ENCODE measurements at regions of chr7 and their contacts with region 1.

Region 1: GRCh38 chr7:55641273-55641691 is 69.0 kb upstream of the VOPP1 start:
- DNase-seq: peak; percentile 62 to 90
- H3K4me3 ChIP-seq: no peak overlapping the region
- H3K27ac ChIP-seq: no peak overlapping the region
- H3K4me1 ChIP-seq: peaks cover 12% of the 10 kb centered on the region
- H3K27me3 ChIP-seq: no peaks in the 10 kb centered on the region
- CTCF ChIP-seq: peak; percentile 100

Region 2: DNA sequence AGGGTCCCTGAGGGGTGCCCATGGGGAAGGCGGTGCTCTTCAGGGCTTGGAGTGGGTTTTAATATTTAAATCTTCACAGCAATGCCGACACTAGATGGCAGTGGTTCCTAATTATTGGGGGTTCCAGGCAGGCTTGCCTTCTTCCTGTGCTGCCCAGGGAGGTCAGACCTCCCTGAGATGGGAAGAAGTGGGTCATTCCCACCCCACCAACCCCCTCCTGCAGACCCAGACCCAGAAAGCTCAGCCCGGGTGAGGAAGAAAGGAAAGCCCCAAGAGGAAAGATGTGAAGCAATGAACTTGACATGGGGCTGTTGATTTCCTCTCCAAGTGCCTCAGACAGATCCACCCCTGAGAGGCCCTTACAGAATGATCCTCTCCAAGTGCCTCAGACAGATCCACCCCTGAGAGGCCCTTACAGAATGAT is 361.2 kb before region 1 on chr7:
- CTCF ChIA-PET with region 1: no interaction called
- POLR2A ChIA-PET with region 1: no interaction called
- intact Hi-C with region 1: loop called (anchors 10 kb)
- DNase-seq: peak; percentile 72 to 74
- H3K4me3 ChIP-seq: no peak overlapping the region
- H3K27ac ChIP-seq: no peak overlapping the region
- H3K4me1 ChIP-seq: no peaks in the 10 kb centered on the region
- H3K27me3 ChIP-seq: peaks cover 54% of the 10 kb centered on the region
- CTCF ChIP-seq: peak; percentile 99

Region 3: DNA sequence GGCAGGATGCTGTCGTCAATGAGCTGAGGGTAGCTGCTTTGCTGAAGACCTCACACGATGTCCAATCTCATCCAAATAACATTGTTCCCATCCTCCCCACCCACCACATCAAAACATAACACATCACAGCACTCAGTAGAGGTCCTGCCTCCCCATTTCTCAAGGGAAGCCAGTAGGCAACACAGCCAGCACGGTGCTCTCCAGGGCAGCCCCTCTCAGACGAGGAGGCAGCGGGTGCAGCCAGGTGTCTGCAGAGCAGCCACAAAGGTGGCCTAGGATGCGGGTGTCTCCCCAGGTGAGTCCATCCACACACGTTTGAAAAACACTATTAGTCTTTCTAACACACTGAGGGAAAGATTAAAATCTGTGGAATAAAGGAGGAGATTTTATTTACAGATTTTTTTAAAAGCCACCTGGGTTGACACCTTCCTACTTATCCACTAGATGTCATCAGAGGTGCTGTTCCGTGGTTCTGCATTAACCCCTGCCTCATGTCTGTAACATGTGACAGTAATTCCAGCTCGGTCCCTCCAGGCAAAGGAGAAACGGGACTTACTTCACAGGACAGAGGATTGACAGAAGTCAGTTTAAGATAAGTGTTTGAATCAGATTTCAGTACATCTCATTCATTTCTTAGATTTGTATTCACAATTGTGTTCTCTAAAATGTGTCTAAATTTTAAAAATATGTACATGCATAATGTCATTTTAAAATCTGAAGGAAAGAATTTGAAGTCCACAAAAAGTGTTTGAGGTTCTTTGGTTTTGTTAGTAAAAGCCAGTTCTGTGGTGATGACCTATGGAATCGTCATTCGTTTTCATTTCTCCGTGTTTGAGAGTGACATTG is 208.1 kb before region 1 on chr7:
- CTCF ChIA-PET with region 1: interaction called, 3 read pairs
- POLR2A ChIA-PET with region 1: no interaction called
- intact Hi-C with region 1: loop called (anchors 10 kb)
- DNase-seq: peak; percentile 47 to 79
- H3K4me3 ChIP-seq: no peak overlapping the region
- H3K27ac ChIP-seq: no peak overlapping the region
- H3K4me1 ChIP-seq: no peaks in the 10 kb centered on the region
- H3K27me3 ChIP-seq: no peaks in the 10 kb centered on the region
- CTCF ChIP-seq: peak; percentile 93

Region 4: DNA sequence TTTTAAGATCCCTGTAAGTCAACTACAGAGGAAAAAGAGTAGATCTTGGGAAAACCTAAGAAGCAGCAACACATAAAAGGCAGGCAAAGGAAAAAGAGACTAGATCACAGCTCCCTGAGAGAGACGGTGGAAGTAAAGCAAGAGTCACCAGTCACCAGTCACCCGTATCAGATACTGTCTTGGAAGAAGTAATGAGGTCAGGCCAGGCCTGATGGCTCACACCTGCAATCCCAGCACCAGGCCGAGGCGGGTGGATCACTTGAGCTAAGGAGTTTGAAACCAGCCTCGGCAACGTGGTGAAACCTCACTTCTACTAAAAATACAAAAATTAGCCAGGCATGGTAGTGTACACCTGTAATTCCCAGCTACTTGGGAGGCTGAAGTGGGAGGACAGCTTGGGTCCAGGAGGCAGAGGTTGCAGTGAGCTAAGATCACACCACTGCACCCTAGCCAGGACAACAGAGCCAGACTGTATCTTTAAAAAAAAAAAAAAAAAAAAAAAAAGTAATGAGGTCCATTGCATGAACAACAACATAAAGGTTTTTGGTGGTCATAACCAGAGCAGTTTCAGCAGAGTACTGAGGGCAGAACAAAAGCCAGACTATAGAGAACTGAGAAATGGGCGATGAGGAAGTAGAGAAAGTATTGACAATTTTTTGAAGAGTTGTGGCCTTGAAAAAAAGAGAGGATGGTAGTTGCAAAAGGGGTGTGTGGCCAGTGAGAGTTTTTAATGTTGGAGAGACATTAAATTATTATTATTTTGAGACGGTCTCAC is 262.9 kb after region 1 on chr7:
- CTCF ChIA-PET with region 1: no interaction called
- POLR2A ChIA-PET with region 1: no interaction called
- intact Hi-C with region 1: loop called (anchors 10 kb)
- DNase-seq: no peak
- H3K4me3 ChIP-seq: no peak overlapping the region
- H3K27ac ChIP-seq: no peak overlapping the region
- H3K4me1 ChIP-seq: no peaks in the 10 kb centered on the region
- H3K27me3 ChIP-seq: no peaks in the 10 kb centered on the region
- CTCF ChIP-seq: no peak

Region 5: DNA sequence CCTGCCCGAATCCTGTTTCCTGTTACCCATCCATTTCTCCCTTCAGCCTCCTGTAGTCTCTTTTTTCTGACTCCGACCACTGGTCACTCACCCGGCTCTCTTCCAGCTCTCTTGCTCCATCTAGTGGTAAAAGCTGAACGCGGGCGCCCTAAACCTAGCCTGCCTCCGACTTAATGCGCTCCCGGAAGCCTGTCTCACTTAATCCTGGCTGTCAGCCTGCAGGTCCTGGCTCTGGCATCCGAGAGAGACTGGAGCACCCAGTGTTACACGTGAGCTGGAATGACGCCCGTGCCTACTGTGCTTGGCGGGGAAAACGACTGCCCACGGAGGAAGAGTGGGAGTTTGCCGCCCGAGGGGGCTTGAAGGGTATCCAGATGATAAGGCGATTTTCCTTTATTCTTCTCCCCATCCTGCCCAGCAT is 433.1 kb after region 1 on chr7:
- CTCF ChIA-PET with region 1: interaction called, 12 read pairs
- POLR2A ChIA-PET with region 1: no interaction called
- intact Hi-C with region 1: loop called (anchors 1 kb)
- DNase-seq: peak; percentile 86 to 95
- H3K4me3 ChIP-seq: no peak overlapping the region
- H3K27ac ChIP-seq: no peak overlapping the region
- H3K4me1 ChIP-seq: peaks cover 29% of the 10 kb centered on the region
- H3K27me3 ChIP-seq: no peaks in the 10 kb centered on the region
- CTCF ChIP-seq: peak; percentile 100

Measured in PC-9 (cell line).